Gastrocnemius medialis (tissue), 4 donors: ENCODE measurements at regions of chr15 and their contacts with region 1.

Region 1: DNA sequence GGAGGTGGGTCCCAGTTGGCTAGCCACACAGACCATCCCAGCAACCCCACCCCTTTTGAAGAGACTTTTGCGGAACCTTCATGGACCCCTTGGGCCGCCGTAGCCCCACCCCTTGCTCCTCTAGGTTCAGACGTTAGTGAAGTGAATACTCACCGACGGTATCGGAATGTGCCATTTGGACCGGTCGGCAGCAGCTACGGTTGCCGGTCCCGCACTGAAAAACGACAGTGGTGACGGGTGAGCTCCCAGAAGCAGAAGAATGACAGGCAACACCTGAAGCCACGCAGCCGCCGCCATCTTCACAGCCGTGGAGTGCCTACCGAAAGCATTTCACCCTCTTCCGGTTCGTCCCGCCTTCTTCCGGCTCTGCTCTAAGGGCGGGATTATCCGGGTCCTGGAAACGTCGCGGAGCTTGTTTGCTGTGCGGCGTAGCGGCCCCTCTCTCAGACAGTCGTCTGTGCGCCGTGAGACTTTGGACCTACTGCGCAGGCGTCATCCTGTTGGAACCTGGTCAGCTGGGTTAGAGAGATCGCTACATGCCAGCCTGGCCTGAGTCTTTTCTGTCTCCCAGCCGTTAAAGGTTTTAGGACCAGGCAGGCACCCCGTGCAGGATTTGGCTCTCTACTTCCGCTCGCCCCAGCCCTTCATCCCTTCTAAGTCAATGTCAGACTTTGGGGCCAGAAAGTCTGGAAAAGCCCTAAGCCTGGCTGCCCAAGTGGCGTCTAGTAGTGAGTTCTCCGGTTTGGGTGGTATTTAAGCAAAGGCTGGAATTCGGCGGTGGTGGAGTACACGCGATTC is at the starts of genes GANC and TMEM87A:
- DNase-seq: peak; percentile 98
- ATAC-seq: peak; percentile 92
- H3K4me3 ChIP-seq: peak within 1 kb of the TSS; percentile 80 to 86 (median 84)
- H3K27ac ChIP-seq: peak within 1 kb of the TSS; percentile 94 to 98 (median 98)
- H3K4me1 ChIP-seq: peaks cover 46 to 50% of the 10 kb centered on the region in 2 donors
- H3K27me3 ChIP-seq: no peaks in the 10 kb centered on the region
- CTCF ChIP-seq: peak in 1 of 5 experiments; percentile 4
- POLR2A ChIP-seq: peak; percentile 81 to 84
- total RNA-seq, gene GANC: 5.9 to 26.3 (median 11.9) TPM
- total RNA-seq, gene TMEM87A: 29.4 to 67.6 (median 37.4) TPM

Region 2: GRCh38 chr15:42018306-42019224 is 254.7 kb before region 1 on chr15:
- in situ Hi-C with region 1: no loop called
- intact Hi-C with region 1: no loop called
- DNase-seq: peak; percentile 36 to 72
- ATAC-seq: peak; percentile 78 to 94
- H3K4me3 ChIP-seq: no peak overlapping the region
- H3K27ac ChIP-seq: peak overlapping the region in 3 of 4 donors; percentile 62 to 74 (median 65)
- H3K4me1 ChIP-seq: peaks cover 22 to 27% of the 10 kb centered on the region in 2 donors
- H3K27me3 ChIP-seq: no peaks in the 10 kb centered on the region
- CTCF ChIP-seq: no peak
- POLR2A ChIP-seq: no peak

Region 3: DNA sequence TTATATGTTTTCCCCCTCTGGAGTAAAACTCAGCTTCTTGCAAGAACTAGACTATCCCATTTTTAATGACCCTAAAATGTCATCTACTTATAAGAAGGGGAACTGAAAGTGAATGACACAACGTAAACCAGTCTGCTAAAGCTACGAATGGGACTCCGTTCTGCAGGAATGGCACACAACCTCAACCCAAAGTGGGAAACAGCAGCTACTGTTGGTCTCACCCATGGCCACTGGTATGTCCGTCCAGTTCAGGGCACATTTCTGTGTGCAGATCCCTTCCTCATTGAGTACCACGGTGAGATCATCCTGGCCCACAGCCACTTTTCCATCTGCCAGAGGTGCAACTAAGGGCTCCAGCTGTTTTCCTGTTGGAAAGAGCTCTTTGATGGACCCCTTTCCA is 89.0 kb before region 1 on chr15:
- in situ Hi-C with region 1: no loop called
- intact Hi-C with region 1: no loop called
- DNase-seq: no peak
- ATAC-seq: no peak
- H3K4me3 ChIP-seq: no peak overlapping the region
- H3K27ac ChIP-seq: no peak overlapping the region
- H3K4me1 ChIP-seq: no peaks in the 10 kb centered on the region
- H3K27me3 ChIP-seq: no peaks in the 10 kb centered on the region
- CTCF ChIP-seq: no peak
- POLR2A ChIP-seq: no peak

Region 4: GRCh38 chr15:42286445-42287029 is 13.2 kb after region 1 on chr15:
- in situ Hi-C with region 1: no loop called
- intact Hi-C with region 1: no loop called
- DNase-seq: no peak
- ATAC-seq: no peak
- H3K4me3 ChIP-seq: no peak overlapping the region
- H3K27ac ChIP-seq: peak overlapping the region in 1 of 4 donors; percentile 3
- H3K4me1 ChIP-seq: peaks cover 14 to 34% of the 10 kb centered on the region in 2 donors
- H3K27me3 ChIP-seq: no peaks in the 10 kb centered on the region
- CTCF ChIP-seq: no peak
- POLR2A ChIP-seq: no peak

Region 5: DNA sequence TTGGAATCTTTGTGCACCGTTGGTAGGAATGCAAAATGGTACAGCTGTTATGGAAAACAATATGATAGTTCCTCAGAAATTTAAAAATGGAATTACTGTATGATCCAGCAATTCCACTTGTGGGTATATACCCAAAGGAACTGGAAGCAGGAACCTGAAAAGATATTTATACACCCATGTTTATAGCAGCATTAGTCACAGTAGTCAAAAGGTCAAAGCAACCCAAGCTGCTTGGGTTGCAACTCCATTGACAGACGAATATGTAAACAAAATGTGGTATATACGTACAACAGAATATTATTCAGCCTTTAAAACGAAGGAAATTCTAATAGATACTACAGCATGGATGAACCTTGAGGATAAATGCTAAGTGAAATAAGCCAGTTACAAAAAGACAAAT is 51.0 kb after region 1 on chr15:
- in situ Hi-C with region 1: no loop called
- intact Hi-C with region 1: loop called (anchors 5 kb)
- DNase-seq: peak in 1 of 2 donors; percentile 20
- ATAC-seq: peak; percentile 94 to 97
- H3K4me3 ChIP-seq: no peak overlapping the region
- H3K27ac ChIP-seq: peak overlapping the region; percentile 63 to 85 (median 72)
- H3K4me1 ChIP-seq: peaks cover 14 to 15% of the 10 kb centered on the region in 2 donors
- H3K27me3 ChIP-seq: no peaks in the 10 kb centered on the region
- CTCF ChIP-seq: no peak
- POLR2A ChIP-seq: no peak

Region 6: GRCh38 chr15:42495361-42496212 is 222.3 kb after region 1 on chr15 and contains the start of gene SNAP23:
- in situ Hi-C with region 1: no loop called
- intact Hi-C with region 1: loop called (anchors 2 kb)
- DNase-seq: peak; percentile 94 to 96
- ATAC-seq: peak; percentile 85 to 90
- H3K4me3 ChIP-seq: peak within 1 kb of the TSS; percentile 73 to 92 (median 84)
- H3K27ac ChIP-seq: peak within 1 kb of the TSS; percentile 88 to 97 (median 96)
- H3K4me1 ChIP-seq: peaks cover 41 to 52% of the 10 kb centered on the region in 2 donors
- H3K27me3 ChIP-seq: no peaks in the 10 kb centered on the region
- CTCF ChIP-seq: no peak
- POLR2A ChIP-seq: peak; percentile 95 to 99
- total RNA-seq, gene SNAP23: 26.7 to 74.3 (median 40.2) TPM